B cell (primary cell): ENCODE measurements at regions of chr14 and their contacts with region 1.

Region 1: GRCh38 chr14:78737116-78737515 is 566.9 kb downstream of the NRXN3 start:
- DNase-seq: no peak
- ATAC-seq: no peak
- H3K4me3 ChIP-seq: no peak overlapping the region
- H3K4me3 Mint-ChIP-seq: no peak overlapping the region
- H3K27ac ChIP-seq: no peak overlapping the region
- H3K27ac Mint-ChIP-seq: no peak overlapping the region
- H3K4me1 ChIP-seq: no peaks in the 10 kb centered on the region
- H3K4me1 Mint-ChIP-seq: no peaks in the 10 kb centered on the region
- H3K27me3 ChIP-seq: no peaks in the 10 kb centered on the region
- H3K27me3 Mint-ChIP-seq: no peaks in the 10 kb centered on the region
- CTCF ChIP-seq: no peak

Region 2: DNA sequence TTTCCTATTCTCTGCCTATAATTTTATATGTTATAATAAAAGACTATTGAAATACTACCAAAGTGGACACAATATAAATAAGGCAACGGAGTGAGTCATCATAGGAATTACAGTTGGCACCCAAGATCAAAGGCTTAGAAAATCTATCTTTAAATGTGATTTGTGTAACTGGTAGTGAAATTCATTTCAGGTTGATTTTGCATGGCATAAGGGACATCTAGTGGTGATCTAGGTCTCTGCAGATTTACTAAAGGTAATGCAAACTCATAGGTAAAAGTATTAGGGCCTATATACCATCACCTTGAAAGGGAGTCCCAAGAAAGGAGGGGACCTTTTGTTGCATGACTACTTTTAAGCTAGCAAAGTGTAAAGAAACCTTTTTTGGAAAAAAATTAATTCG is 39.8 kb before region 1 on chr14:
- CTCF ChIA-PET with region 1: no interaction called
- POLR2A ChIA-PET with region 1: no interaction called
- intact Hi-C with region 1: loop called (anchors 1 kb)
- DNase-seq: no peak
- ATAC-seq: no peak
- H3K4me3 ChIP-seq: no peak overlapping the region
- H3K4me3 Mint-ChIP-seq: no peak overlapping the region
- H3K27ac ChIP-seq: no peak overlapping the region
- H3K27ac Mint-ChIP-seq: no peak overlapping the region
- H3K4me1 ChIP-seq: no peaks in the 10 kb centered on the region
- H3K4me1 Mint-ChIP-seq: no peaks in the 10 kb centered on the region
- H3K27me3 ChIP-seq: no peaks in the 10 kb centered on the region
- H3K27me3 Mint-ChIP-seq: peaks cover 3% of the 10 kb centered on the region
- CTCF ChIP-seq: no peak

Region 3: GRCh38 chr14:79134361-79134760 is 397.2 kb after region 1 on chr14:
- CTCF ChIA-PET with region 1: no interaction called
- POLR2A ChIA-PET with region 1: no interaction called
- intact Hi-C with region 1: no loop called
- DNase-seq: no peak
- ATAC-seq: no peak
- H3K4me3 ChIP-seq: no peak overlapping the region
- H3K4me3 Mint-ChIP-seq: no peak overlapping the region
- H3K27ac ChIP-seq: no peak overlapping the region
- H3K27ac Mint-ChIP-seq: no peak overlapping the region
- H3K4me1 ChIP-seq: no peaks in the 10 kb centered on the region
- H3K4me1 Mint-ChIP-seq: no peaks in the 10 kb centered on the region
- H3K27me3 ChIP-seq: no peaks in the 10 kb centered on the region
- H3K27me3 Mint-ChIP-seq: no peaks in the 10 kb centered on the region
- CTCF ChIP-seq: no peak